CD8-positive, alpha-beta T cell (primary cell): ENCODE measurements at regions of chr16 and their contacts with region 1.

Region 1: DNA sequence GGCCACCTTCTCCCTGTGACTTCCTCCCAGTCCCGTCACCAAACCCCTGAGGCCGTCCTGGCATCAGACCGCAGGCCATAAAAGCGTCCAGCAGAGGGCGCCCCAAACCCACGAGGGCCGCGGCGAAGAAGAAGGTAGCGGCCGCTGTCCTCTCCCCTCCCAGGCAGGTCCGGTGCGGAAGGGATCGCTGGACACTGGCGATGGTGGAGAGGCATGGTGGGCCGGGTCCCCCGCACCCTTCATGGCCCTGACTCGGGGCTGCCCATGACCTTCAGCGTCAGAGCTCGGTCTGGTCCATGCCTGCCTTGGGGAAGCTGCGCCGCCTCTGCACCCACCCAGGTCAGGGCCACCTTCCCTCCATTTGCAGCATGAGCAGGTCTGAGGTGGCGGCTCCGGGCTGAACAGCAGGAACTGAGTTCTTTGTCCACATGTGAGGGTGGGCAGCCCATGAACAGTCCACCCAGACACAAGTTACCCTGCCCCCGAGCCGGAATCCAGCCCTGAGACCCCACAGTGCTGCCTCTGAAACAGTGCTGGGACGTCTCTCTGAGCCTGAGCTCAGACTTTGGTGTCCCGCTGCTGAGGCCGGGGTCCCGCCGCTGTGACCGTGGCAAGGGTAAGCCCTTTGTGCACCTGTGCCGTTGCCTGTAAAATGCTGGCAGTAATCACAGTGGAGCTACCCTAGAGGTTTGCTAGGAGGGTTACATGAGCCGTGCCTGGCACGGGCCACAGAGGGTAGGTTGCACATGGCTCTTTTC is 40.8 kb upstream of the CMIP start:
- DNase-seq: peak; percentile 67 to 90 (median 82)
- ATAC-seq: peak; percentile 90
- H3K4me3 ChIP-seq: peak overlapping the region; percentile 35 to 39
- H3K4me3 Mint-ChIP-seq: no peak overlapping the region
- H3K27ac ChIP-seq: no peak overlapping the region
- H3K27ac Mint-ChIP-seq: no peak overlapping the region
- H3K4me1 ChIP-seq: peaks cover 8% of the 10 kb centered on the region
- H3K4me1 Mint-ChIP-seq: no peaks in the 10 kb centered on the region
- H3K27me3 ChIP-seq: no peaks in the 10 kb centered on the region
- H3K27me3 Mint-ChIP-seq: no peaks in the 10 kb centered on the region
- CTCF ChIP-seq: peak; percentile 88

Region 2: DNA sequence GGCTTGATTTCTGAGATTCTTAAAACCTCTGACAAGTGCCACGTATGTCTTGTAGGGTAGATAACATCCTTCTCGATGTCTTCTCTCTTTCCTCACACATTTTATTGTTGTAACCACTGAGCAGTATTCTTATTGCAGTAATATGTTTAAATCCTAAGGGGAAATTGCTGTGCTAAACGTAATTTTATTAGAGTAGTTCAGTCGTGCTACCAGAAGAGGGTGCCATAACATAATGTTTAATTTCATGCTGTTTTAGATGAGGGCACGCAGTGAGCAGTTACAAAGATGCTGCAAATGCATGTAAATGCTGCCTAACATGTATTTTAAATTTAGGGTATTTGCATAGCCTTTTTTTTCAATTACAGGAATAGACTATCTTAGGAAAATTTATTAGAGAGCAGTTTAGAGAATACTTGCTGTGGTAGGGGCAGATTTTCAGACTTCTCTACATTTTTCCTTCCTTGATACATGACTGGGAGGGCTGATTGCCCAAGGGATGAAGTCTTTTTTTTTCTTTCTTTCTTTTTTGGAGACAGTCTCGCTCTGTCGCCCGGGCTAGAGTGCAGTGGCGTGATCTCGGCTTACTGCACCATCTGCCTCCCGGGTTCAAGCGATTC is 37.4 kb before region 1 on chr16:
- CTCF ChIA-PET with region 1: interaction called, 4 read pairs
- POLR2A ChIA-PET with region 1: no interaction called
- intact Hi-C with region 1: loop called in 1 of 2 experiments (anchors 2 kb)
- DNase-seq: peak in 3 of 9 experiments; percentile 18 to 72 (median 64)
- ATAC-seq: peak; percentile 83
- H3K4me3 ChIP-seq: no peak overlapping the region
- H3K4me3 Mint-ChIP-seq: no peak overlapping the region
- H3K27ac ChIP-seq: no peak overlapping the region
- H3K27ac Mint-ChIP-seq: no peak overlapping the region
- H3K4me1 ChIP-seq: no peaks in the 10 kb centered on the region
- H3K4me1 Mint-ChIP-seq: no peaks in the 10 kb centered on the region
- H3K27me3 ChIP-seq: no peaks in the 10 kb centered on the region
- H3K27me3 Mint-ChIP-seq: no peaks in the 10 kb centered on the region
- CTCF ChIP-seq: peak; percentile 85

Region 3: DNA sequence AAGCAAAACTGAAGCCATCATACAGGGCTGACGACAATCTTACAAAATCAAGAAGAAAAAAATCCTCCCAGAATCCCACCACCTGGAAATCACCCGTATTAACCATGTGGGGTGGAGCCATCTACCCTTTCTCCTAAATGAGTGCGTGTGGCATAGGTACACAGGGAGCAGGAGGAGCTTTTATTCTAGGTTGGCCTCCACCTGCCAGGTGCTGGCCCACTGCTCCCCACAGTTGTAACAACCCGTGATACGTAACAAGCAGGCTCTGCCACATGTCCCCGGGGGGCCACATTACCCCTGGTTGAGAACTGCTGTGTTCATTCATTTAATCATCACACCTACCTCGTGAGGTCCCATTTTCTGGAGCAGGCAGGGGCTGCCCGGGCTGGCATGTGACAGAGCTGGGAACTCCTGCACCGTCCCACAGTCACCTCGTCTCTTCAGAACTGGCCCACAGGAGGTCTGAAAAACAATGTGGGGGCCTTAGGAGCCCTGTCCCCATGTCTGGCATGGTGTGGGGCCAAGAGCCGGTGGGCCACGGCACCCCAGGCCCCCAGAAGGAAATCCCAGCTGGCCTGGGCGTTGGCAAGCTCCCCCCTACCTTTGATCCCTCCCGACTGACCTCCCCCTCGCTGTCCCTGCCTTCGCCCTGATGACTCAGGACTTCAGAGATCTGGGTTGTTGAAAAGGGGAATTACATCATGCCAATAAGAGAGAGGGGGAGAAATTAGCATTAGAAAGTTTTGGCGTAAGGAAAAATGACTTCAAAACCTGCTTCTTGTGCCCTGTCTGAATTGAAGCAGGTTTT is 53.7 kb after region 1 on chr16:
- CTCF ChIA-PET with region 1: interaction called, 4 read pairs
- POLR2A ChIA-PET with region 1: no interaction called
- intact Hi-C with region 1: loop called in 1 of 2 experiments (anchors 10 kb)
- DNase-seq: no peak
- ATAC-seq: no peak
- H3K4me3 ChIP-seq: no peak overlapping the region
- H3K4me3 Mint-ChIP-seq: no peak overlapping the region
- H3K27ac ChIP-seq: no peak overlapping the region
- H3K27ac Mint-ChIP-seq: peak overlapping the region; percentile 55
- H3K4me1 ChIP-seq: peaks cover 22% of the 10 kb centered on the region
- H3K4me1 Mint-ChIP-seq: peaks cover 73% of the 10 kb centered on the region
- H3K27me3 ChIP-seq: no peaks in the 10 kb centered on the region
- H3K27me3 Mint-ChIP-seq: no peaks in the 10 kb centered on the region
- CTCF ChIP-seq: no peak

Region 4: DNA sequence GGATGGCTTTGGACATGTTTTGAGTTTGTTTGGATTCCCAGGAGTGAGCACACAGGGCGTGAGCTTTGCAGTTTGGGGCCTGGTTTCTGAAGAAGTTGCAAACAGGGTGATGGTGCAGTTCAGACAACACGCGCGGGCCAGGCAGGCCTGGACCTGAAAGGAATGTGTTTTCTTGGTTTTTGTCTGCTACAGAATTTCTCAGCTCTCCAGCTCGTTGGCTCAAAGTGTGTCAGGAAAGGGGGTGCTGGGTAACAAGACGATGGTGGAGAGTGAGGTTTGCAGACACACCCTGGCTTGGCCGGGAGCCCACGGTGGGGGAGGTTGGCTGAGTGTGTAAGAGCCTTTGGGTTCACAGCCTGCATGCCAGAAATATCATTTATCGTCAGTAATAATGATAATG is 123.1 kb after region 1 on chr16:
- CTCF ChIA-PET with region 1: interaction called, 12 read pairs
- POLR2A ChIA-PET with region 1: no interaction called
- intact Hi-C with region 1: no loop called
- DNase-seq: peak in 5 of 9 experiments; percentile 53 to 79 (median 62)
- ATAC-seq: no peak
- H3K4me3 ChIP-seq: no peak overlapping the region
- H3K4me3 Mint-ChIP-seq: peak overlapping the region; percentile 30
- H3K27ac ChIP-seq: peak overlapping the region; percentile 29 to 95
- H3K27ac Mint-ChIP-seq: peak overlapping the region; percentile 89
- H3K4me1 ChIP-seq: peaks cover 44% of the 10 kb centered on the region
- H3K4me1 Mint-ChIP-seq: peaks cover 56% of the 10 kb centered on the region
- H3K27me3 ChIP-seq: no peaks in the 10 kb centered on the region
- H3K27me3 Mint-ChIP-seq: no peaks in the 10 kb centered on the region
- CTCF ChIP-seq: no peak

Region 5: DNA sequence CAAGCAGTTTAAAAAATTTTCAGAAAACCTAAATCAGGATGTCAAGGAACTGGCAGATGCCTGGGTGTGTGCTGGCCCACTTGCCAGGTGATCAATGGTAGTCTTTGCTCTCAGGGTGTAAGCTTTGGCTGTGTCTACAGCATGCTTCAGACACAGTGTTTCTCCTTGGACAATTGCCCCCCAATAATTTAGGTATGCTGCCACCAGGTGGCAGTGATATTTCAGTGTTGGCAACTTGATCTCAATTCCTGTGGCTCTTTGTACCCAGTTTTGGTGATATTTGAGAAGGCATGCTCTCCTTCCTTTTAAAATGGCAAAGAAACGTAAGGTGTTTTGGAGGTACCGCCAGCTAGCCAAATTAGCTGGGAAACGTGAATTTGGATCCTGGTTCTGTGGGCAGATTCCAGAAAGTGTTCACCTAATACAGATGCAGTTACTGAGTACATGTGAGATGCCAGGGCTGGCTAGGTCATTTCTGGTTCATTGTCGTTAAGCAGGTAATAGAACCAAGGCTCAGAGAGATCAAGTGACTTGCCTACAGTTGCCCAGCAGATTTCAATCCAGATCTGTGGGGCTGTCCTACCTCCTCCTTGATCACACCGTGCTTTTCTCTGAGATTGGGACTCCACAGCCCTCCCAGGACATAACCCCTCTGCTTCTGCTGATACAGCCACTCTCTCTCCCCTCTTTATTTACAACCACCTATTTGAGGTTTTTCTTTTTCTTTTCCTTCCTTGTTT is 219.7 kb after region 1 on chr16:
- CTCF ChIA-PET with region 1: interaction called, 32 read pairs
- POLR2A ChIA-PET with region 1: no interaction called
- intact Hi-C with region 1: loop called (anchors 1 to 2 kb)
- DNase-seq: peak; percentile 29 to 81 (median 68)
- ATAC-seq: peak; percentile 68
- H3K4me3 ChIP-seq: no peak overlapping the region
- H3K4me3 Mint-ChIP-seq: no peak overlapping the region
- H3K27ac ChIP-seq: no peak overlapping the region
- H3K27ac Mint-ChIP-seq: no peak overlapping the region
- H3K4me1 ChIP-seq: no peaks in the 10 kb centered on the region
- H3K4me1 Mint-ChIP-seq: peaks cover 4% of the 10 kb centered on the region
- H3K27me3 ChIP-seq: no peaks in the 10 kb centered on the region
- H3K27me3 Mint-ChIP-seq: no peaks in the 10 kb centered on the region
- CTCF ChIP-seq: peak; percentile 59

Region 6: DNA sequence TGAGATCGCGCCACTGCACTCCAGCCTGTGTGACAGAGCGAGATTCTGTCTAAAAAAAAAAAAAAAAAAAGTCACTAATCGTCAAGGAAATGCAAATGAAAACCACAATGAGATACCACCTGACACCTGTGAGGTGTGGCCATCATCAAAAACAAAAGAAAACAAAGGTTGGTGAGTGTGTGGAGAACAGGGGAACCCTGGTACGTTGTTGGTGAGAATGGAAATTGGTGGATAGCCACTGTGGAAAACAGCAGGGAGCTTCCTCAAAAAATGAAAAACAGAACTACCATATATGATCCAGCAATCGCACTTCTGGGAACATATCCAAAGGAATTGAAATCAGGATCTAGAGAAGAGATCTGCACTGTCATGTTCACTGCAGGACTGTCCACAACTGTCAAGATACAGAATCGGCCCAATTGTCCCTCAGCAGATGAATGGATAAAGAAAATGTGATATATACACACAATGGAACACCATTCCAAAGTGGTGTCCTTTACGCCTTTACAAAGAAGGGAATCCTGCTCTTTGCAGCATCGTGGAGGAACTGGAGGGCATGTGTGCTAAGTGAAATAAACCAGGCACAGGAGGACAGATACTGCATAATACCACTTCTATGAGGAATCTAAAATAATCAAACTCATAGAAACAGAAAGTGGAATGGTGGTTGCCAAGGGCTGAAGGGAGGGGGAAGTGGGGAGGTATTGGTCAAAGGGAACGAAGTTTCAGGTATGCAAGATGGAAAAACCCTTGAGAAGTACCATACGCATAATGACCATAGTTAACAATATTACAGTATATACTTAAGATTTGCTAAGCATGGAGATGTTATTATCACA is 311.8 kb after region 1 on chr16:
- CTCF ChIA-PET with region 1: interaction called, 12 read pairs
- POLR2A ChIA-PET with region 1: no interaction called
- intact Hi-C with region 1: no loop called
- DNase-seq: peak in 6 of 9 experiments; percentile 11 to 84 (median 42)
- ATAC-seq: peak; percentile 61
- H3K4me3 ChIP-seq: peak overlapping the region; percentile 8 to 26
- H3K4me3 Mint-ChIP-seq: peak overlapping the region; percentile 71
- H3K27ac ChIP-seq: peak overlapping the region in 1 of 2 experiments; percentile 70
- H3K27ac Mint-ChIP-seq: peak overlapping the region; percentile 92
- H3K4me1 ChIP-seq: peaks cover 28% of the 10 kb centered on the region
- H3K4me1 Mint-ChIP-seq: peaks cover 47% of the 10 kb centered on the region
- H3K27me3 ChIP-seq: no peaks in the 10 kb centered on the region
- H3K27me3 Mint-ChIP-seq: no peaks in the 10 kb centered on the region
- CTCF ChIP-seq: no peak

Region 7: DNA sequence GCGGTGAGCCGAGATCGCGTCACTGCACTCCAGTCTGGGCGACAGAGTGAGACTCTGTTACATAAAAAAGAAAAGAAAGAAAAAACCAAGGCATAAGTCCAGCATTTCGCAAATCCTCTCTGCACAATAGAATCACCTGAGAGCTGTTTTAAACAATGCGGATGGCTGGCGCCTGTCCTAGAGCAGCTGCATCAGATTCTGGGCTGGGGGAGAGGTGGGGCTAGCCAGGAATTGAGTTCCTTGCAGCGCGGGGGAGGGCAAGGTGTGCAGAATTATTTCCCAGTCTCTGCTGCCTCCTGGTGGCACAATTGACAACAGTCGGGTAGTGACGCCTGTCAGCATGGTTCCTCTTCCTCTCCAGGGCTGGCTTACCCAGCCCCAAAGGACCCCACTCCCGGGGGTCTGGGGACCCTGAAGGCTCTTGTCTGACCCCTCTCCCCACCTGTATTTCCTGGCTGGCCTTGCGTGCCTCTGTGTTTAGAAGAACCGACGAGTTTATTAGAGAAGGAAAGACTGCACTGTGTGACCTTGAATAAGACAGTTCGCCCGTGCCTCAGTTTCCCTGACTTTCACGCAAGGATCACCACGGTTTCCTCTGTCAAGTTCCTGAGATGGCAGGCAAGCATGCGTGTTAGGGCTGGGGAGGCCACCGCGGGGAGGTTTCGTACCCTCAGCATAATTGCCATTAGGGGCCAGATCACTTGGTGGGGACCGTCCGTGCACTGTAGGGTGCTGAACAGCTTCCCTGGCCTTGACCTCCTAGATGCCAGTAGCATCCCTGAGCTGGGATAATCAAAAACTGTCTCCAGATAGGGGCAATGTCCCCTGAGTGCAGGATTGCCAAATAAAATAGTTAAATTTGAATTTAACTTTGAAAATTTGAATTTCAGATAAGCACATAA is 334.3 kb after region 1 on chr16:
- CTCF ChIA-PET with region 1: interaction called, 29 read pairs
- POLR2A ChIA-PET with region 1: no interaction called
- intact Hi-C with region 1: loop called (anchors 1 kb)
- DNase-seq: peak; percentile 69 to 92 (median 87)
- ATAC-seq: peak; percentile 96
- H3K4me3 ChIP-seq: peak overlapping the region; percentile 22 to 24
- H3K4me3 Mint-ChIP-seq: peak overlapping the region; percentile 76
- H3K27ac ChIP-seq: no peak overlapping the region
- H3K27ac Mint-ChIP-seq: no peak overlapping the region
- H3K4me1 ChIP-seq: peaks cover 6% of the 10 kb centered on the region
- H3K4me1 Mint-ChIP-seq: peaks cover 6% of the 10 kb centered on the region
- H3K27me3 ChIP-seq: no peaks in the 10 kb centered on the region
- H3K27me3 Mint-ChIP-seq: no peaks in the 10 kb centered on the region
- CTCF ChIP-seq: peak; percentile 85